ENCODE measurements at regions of chr14 and their contacts with region 1.

Region 1: DNA sequence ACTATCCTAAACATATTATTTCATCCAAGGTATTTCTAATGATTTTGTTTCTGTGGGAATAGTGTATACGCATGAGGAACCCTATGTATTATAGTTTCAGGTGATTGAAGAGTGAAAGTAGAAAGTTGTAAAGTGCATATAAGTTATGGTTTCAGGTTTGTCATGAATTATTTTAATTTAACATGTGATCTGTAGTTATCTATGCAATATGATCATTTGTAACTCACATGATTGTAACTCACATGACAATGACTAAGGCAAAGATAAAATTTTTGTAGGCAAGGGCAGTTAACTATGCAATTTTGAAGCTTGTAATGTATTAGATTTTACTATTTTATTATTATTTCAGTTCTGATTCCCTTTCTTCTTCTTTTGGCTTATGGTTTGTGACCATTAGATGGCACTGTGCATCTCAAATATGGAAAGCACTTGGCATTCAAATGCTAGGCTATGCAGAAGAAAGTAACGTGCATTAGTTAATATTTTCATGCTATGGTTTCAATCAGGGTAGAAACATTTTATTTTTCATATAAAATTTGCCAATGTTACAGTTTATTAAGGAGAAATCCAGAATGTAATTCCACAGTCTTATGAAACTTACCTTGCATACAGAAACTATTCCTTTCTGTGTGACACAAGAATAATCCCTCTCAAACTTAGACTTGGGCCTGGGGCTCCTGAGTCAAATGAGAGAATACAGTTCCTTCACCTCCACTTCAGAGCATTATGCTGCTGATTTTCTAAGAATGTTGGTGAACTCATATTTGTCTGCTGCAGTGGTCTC is 15.8 kb upstream of the TMEM30B start:
- DNase-seq: peak; percentile 37
- H3K4me3 ChIP-seq: no peak overlapping the region
- H3K27ac ChIP-seq: no peak overlapping the region
- H3K4me1 ChIP-seq: no peaks in the 10 kb centered on the region
- H3K27me3 ChIP-seq: no peaks in the 10 kb centered on the region
- CTCF ChIP-seq: peak; percentile 72 to 74

Region 2: GRCh38 chr14:61252369-61253063 is 44.4 kb before region 1 on chr14:
- CTCF ChIA-PET with region 1: no interaction called
- dilution Hi-C with region 1: no loop called
- in situ Hi-C with region 1: no loop called
- intact Hi-C with region 1: no loop called
- DNase-seq: peak; percentile 89
- H3K4me3 ChIP-seq: no peak overlapping the region
- H3K27ac ChIP-seq: no peak overlapping the region
- H3K4me1 ChIP-seq: peaks cover 6% of the 10 kb centered on the region
- H3K27me3 ChIP-seq: no peaks in the 10 kb centered on the region
- CTCF ChIP-seq: peak; percentile 93 to 95

Region 3: GRCh38 chr14:61456720-61457119 is 159.8 kb after region 1 on chr14:
- CTCF ChIA-PET with region 1: no interaction called
- dilution Hi-C with region 1: loop called (anchors 10 kb)
- in situ Hi-C with region 1: loop called in 1 of 2 experiments (anchors 10 kb)
- intact Hi-C with region 1: loop called (anchors 1 kb)
- DNase-seq: peak; percentile 49
- H3K4me3 ChIP-seq: no peak overlapping the region
- H3K27ac ChIP-seq: no peak overlapping the region
- H3K4me1 ChIP-seq: peaks cover 10% of the 10 kb centered on the region
- H3K27me3 ChIP-seq: no peaks in the 10 kb centered on the region
- CTCF ChIP-seq: peak; percentile 81 to 85

Region 4: GRCh38 chr14:61730756-61731373 is 434.0 kb after region 1 on chr14:
- CTCF ChIA-PET with region 1: no interaction called
- dilution Hi-C with region 1: no loop called
- in situ Hi-C with region 1: loop called in 1 of 2 experiments (anchors 25 kb)
- intact Hi-C with region 1: loop called (anchors 2 kb)
- DNase-seq: no peak
- H3K4me3 ChIP-seq: no peak overlapping the region
- H3K27ac ChIP-seq: no peak overlapping the region
- H3K4me1 ChIP-seq: peaks cover 14% of the 10 kb centered on the region
- H3K27me3 ChIP-seq: no peaks in the 10 kb centered on the region
- CTCF ChIP-seq: peak; percentile 14 to 40

Region 5: GRCh38 chr14:62117010-62117750 is 820.3 kb after region 1 on chr14:
- CTCF ChIA-PET with region 1: no interaction called
- dilution Hi-C with region 1: no loop called
- in situ Hi-C with region 1: loop called in 1 of 2 experiments (anchors 25 kb)
- intact Hi-C with region 1: no loop called
- DNase-seq: peak; percentile 40
- H3K4me3 ChIP-seq: peak overlapping the region in 2 of 3 experiments; percentile 4 to 15
- H3K27ac ChIP-seq: no peak overlapping the region
- H3K4me1 ChIP-seq: no peaks in the 10 kb centered on the region
- H3K27me3 ChIP-seq: peaks cover 22% of the 10 kb centered on the region
- CTCF ChIP-seq: peak; percentile 9 to 43

Measured in mammary epithelial cell (primary cell).